Left colon (tissue), 2 donors: ENCODE measurements at regions of chr12 and their contacts with region 1.

Region 1: GRCh38 chr12:49644620-49644994 is 21.2 kb downstream of the PRPF40B start:
- DNase-seq: peak; percentile 63 to 85
- ATAC-seq: peak; percentile 84

Region 2: DNA sequence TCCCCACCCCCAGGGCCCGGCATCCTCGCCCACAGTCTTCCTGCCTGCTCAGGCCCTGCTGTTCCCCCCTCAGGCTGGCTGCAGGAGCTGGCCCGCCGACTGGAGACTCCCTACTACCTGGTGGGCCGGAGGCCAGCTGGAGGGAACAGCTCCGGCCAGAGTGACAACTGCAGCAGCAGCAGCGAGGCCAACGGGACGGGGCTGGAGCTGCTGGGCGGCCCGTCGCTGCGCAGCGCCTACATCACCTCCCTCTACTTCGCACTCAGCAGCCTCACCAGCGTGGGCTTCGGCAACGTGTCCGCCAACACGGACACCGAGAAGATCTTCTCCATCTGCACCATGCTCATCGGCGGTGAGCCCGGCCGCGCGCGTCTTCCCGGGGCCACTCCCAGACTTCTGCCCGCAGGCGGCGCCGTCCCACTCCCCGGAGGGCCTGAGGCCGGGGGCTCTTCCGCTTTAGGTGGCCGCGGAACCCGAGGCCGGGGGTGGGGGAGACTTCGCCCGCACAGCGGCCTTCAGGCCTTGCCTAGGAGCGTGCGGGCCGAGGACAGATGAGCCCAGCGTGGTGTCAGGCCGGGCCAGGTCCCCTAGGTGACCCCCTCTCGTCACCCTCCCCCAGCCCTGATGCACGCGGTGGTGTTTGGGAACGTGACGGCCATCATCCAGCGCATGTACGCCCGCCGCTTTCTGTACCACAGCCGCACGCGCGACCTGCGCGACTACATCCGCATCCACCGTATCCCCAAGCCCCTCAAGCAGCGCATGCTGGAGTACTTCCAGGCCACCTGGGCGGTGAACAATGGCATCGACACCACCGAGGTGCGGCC is 95.6 kb before region 1 on chr12:
- intact Hi-C with region 1: no loop called
- DNase-seq: peak in 1 of 2 donors; percentile 32
- ATAC-seq: peak; percentile 44

Region 3: DNA sequence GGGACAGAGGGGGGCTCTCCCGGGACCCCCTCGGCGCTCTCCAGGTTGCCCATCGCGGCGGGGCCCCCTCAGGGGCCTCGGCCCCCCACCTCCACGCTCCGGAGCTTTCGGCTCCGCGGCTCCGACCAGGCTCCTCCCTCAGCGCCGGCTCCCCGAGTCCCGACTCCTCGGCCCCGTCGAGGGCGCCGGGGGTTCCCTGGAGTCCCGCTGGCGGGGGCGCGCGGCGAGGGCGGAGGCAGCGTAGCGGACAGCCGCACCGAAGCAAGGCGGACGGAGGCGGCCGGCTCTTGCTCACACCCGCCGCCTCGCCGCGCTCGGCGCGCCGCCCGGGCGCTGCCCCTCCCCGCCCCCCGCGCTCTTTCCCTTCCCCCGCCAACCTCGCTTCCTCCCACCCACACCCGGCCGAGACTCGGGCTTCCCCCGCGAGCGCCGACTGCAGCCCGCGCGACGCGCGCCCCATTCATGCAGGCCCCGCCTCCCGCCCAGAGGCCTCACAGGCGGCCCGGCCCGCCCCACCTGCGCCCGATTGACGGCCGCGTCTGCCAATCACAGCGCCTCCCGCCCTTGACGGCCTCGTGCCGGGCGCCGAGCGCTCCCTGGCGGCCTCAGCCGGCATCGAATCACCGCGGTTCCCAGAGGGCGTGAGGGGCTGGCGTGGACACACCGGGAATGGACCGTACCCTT is 62.7 kb after region 1 on chr12 and contains the start of gene FMNL3:
- intact Hi-C with region 1: loop called (anchors 5 kb)
- DNase-seq: peak; percentile 95 to 98
- ATAC-seq: peak; percentile 100
- total RNA-seq, gene FMNL3: 2.9 to 8.0 TPM